HEK293 (cell line): ENCODE measurements at regions of chr1 and their contacts with region 1.

Region 1: DNA sequence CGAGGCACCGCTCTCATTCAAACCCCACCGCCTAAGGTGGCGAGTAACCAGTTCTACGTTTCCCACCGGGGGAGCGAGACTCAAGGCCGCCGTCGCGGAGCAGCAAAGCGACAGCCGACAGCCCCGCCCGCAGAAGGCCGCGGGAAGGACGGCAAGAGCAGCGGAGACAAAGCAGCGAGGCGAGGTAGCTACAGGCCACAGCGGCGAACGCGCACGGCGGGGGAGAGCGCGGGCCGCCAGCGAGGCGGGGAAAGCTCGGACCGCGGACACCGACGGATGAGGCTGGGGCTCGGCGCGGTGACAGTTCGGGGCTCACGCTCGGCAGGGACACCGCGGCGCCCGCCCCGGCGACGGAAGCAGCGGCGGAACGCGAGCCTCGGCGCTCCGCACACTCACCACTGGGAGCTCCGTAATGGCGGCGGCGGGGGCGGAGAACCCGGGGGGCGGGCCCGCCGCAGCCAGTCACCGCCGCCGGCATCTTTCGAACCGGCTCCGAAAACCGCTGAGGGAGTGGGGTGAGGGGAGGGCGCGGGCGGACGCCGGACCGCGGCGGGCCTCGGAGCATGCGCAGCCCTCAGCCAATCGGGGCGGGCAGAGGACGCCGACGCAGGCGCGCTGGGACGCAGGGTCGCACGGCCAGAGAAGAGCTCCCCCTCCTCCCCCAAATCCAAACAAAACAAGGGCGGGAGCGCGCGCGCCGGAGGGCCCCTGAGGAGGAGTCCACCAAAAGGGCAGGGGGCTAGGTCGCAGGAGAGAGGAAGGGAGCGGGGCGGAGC is 666 bp downstream of the HP1BP3 start:
- H3K4me3 ChIP-seq: peak overlapping the region; percentile 98
- H3K27ac ChIP-seq: peak overlapping the region; percentile 89
- H3K4me1 ChIP-seq: peaks cover 3% of the 10 kb centered on the region; the same call in 1 of the 2 replicates
- CTCF ChIP-seq: 0 out of 2 replicates have a peak, but pooled peaks have one; percentile 23

Region 2: GRCh38 chr1:20767271-20767670 is 19.2 kb before region 1 on chr1:
- CTCF ChIA-PET with region 1: no interaction called
- POLR2A ChIA-PET with region 1: interaction called, 22 read pairs
- H3K4me3 ChIP-seq: no peak overlapping the region
- H3K27ac ChIP-seq: no peak overlapping the region
- H3K4me1 ChIP-seq: no peaks in the 10 kb centered on the region
- CTCF ChIP-seq: no peak

Region 3: DNA sequence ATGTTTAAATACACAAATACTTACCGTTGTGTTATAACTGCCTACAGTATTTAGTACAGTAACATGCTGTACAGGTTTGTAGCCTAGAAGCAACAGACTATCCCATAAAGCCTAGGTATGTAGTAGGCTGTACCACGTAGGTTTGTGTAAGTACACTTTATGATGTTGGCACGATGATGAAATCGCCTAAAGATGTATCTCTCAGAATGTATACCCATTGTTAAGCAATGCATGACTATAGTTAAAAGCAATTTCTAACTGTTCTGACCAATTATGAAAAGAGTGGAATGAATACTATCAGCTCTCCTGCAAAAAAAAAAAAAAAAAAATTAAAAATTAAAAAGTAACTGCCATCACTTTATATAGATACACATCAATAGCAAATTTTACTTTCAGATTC is 10.7 kb before region 1 on chr1:
- CTCF ChIA-PET with region 1: no interaction called
- POLR2A ChIA-PET with region 1: interaction called, 22 read pairs
- H3K4me3 ChIP-seq: no peak overlapping the region
- H3K27ac ChIP-seq: no peak overlapping the region
- H3K4me1 ChIP-seq: no peaks in the 10 kb centered on the region
- CTCF ChIP-seq: no peak